ENCODE measurements at regions of chr11 and their contacts with region 1.

Region 1: DNA sequence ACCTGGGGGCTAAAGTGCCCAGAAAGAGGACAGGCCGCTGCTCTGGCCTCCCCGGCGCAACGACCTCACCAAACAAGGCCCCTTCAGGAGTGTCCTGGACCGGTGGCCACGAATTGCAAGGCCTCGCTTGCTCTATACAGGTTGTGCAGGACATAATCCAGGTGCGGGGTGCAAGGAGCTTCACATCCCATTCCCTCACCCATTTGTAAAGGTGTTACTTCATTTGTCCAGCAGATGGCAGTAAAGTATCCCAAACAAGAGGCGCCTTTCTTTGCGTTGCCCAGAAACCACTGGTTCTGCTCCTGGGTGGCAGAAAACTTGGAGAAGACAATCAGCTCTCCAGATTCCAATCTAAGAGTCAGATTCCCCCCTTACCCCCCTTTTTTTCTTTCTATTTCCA is 35.9 kb upstream of the PRDM11 start:
- DNase-seq: peak; percentile 71

Region 2: GRCh38 chr11:45209891-45210699 is 99.5 kb after region 1 on chr11:
- intact Hi-C with region 1: loop called in 1 of 2 experiments (anchors 10 kb)
- DNase-seq: peak; percentile 94

Region 3: GRCh38 chr11:45233121-45233803 is 122.7 kb after region 1 on chr11:
- intact Hi-C with region 1: loop called in 1 of 2 experiments (anchors 5 kb)
- DNase-seq: peak; percentile 91

Region 4: GRCh38 chr11:45298718-45299117 is 188.2 kb after region 1 on chr11:
- intact Hi-C with region 1: loop called (anchors 2 to 5 kb)
- DNase-seq: no peak

Region 5: GRCh38 chr11:45319077-45319476 is 208.5 kb after region 1 on chr11:
- intact Hi-C with region 1: no loop called
- DNase-seq: no peak

Region 6: DNA sequence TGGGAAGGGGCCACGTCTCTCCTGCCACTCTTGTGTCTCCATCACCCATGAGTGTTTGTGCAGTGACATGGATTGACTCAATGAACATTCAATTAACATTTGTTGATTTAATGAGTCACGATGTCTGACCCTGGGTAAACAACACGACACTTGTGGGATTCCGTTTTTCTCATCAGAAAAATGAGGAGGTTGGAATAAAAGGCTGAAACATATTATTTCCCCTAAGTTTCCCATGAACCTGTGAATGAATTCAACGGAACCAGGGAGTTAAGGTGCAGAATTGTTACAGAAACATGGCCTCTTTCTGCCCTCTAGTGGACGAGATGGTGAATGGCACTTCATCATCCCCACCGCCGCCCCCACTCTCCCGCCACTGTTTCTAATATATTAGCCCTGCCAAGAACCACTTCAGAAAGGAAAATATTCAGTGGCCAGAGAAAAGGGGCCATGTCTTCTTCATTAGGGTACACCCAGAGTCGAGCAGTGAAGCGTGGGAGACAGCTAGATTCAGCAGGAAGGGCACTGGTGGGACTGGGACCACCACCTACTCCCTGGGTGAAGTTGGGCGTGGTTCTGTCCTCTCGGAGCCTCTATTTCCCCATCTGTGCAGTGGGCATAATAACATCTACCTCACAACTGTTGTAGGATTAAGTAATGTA is 221.8 kb after region 1 on chr11:
- intact Hi-C with region 1: loop called (anchors 2 to 5 kb)
- DNase-seq: no peak

Measured in posterior vena cava (tissue), 2 donors.